ENCODE measurements at regions of chr7 and their contacts with region 1.

Region 1: DNA sequence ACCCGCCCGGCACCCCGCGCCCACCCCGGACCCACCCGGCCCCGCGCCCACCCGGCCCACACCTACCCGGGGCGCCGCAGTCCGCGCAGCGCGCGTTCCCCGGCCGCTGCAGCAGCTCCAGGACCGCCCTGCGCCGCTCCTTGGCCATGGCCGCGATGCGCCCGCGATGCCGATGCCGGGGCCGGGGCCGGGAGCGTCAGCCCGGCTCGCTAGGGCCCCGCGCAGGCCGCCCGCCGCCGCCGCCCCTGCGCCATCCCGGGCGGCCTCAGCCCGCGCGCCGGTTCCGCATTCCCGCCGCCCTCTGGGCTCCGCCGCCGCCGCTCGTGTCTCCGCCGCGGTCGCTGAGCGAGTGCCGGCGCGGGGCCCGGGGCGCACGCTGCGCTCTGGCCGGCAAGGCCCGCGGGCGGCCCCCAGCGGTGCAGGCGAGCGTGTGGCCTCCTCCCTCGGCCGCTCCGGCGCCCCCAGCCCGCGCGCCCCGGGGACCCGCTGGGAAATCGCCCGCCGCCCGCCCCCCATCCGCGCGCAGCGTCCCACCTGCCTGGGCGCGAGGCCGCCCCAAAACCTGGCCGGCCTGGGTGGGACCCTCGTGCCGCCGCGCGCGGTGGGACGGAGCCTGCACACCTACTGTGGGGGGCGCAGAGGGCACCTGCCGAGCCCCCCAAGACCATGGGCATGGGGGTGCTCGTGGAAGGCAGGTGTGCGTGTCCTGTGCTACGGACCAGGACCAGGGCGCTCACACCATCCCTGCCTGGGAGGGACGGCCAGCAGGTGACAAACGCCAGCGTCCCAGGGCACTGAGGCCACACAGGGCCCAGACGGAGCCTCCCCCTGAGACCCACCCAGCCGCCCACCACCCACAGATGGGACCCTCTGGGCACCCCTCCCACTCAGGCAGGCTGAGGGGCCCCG is at the start of gene ADAP1:
- DNase-seq: no peak
- ATAC-seq: peak; percentile 77
- H3K4me3 ChIP-seq: peak within 1 kb of the TSS; percentile 44 to 46
- H3K27ac ChIP-seq: no peak within 1 kb of the TSS
- H3K4me1 ChIP-seq: 0 out of 2 replicates have a peak, but pooled peaks cover 4% of the 10 kb centered on the region
- H3K27me3 ChIP-seq: no peaks in the 10 kb centered on the region
- CTCF ChIP-seq: peak; percentile 92; the same call in 1 of the 2 replicates
- total RNA-seq, gene ADAP1: 3.1 TPM

Region 2: DNA sequence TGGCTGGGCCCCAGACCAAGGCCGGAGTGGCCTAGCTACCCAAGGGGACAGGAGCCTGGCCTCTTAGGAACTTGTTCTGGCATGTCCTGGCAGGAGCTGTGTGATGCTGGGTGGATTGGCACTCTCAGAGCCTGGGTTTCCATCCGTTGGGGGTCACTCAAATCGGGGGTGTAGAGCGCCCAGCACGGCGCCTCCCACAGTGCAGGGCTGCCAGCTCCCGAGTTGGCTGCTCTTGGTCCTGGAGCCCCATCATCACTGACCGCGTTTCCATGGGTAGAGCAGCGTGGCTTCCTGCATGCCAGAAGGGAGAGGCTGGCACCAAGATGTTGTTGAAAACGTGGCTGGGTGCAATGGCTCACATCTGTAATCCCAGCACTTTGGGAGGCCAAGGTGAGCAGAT is 348.4 kb after region 1 on chr7:
- CTCF ChIA-PET with region 1: no interaction called
- POLR2A ChIA-PET with region 1: interaction called, 22 read pairs
- in situ Hi-C with region 1: no loop called
- intact Hi-C with region 1: no loop called
- DNase-seq: no peak
- ATAC-seq: no peak
- H3K4me3 ChIP-seq: no peak overlapping the region
- H3K27ac ChIP-seq: no peak overlapping the region
- H3K4me1 ChIP-seq: peaks cover 6% of the 10 kb centered on the region
- H3K27me3 ChIP-seq: no peaks in the 10 kb centered on the region
- CTCF ChIP-seq: no peak

Measured in Panc1 (cell line).